Heart right ventricle (tissue), 16 donors: ENCODE measurements at regions of chr2 and their contacts with region 1.

Region 1: DNA sequence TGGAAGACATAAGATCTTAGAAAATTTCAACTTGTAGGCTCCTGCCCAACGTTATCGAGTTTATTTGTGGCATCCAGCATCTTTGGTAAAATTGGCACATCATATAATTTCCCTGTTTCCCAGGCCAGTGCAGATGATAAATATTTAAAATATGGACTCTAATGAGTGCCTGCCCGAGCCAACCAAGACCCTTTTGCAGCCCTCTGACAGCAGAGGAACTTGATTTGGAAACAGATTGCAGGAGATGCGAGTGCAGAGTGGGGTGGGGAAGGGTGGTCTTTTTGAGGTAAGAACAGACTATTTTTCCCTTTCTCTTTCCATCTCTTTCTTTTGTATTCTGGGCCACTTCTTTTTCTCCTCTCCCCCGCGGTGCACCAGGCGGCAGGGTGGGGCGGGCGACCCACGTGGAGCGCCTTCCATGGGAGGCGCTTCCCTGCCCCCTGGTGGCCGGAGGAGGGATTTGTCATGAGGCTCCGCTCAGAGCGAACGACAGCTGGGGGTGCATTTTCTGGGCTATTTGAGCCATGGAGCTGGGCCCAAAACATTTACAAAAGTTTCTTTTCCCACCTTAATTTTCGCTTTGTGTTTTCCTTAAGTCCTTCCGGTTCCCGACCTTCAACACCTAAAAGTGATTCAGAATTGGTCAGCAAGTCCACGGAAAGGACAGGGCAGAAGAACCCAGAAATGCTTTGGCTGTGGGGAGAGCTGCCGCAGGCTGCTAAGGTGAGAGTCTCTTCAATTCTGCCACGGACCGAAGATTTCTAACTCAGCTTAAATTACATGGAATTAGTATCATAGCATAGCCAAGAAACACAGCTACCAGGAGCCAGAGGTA is 32.7 kb downstream of the LPIN1 start:
- DNase-seq: peak; percentile 79 to 85
- ATAC-seq: peak; percentile 90 to 94 (median 92)
- H3K4me3 ChIP-seq: peak overlapping the region in 6 of 10 donors; percentile 16 to 36 (median 24)
- H3K27ac ChIP-seq: peak overlapping the region in 1 of 10 donors; percentile 54
- H3K4me1 ChIP-seq: peaks cover 0 to 36% (median 20%) of the 10 kb centered on the region in 9 donors
- H3K27me3 ChIP-seq: no peaks in the 10 kb centered on the region
- CTCF ChIP-seq: peak; percentile 96 to 99 (median 97)

Region 2: DNA sequence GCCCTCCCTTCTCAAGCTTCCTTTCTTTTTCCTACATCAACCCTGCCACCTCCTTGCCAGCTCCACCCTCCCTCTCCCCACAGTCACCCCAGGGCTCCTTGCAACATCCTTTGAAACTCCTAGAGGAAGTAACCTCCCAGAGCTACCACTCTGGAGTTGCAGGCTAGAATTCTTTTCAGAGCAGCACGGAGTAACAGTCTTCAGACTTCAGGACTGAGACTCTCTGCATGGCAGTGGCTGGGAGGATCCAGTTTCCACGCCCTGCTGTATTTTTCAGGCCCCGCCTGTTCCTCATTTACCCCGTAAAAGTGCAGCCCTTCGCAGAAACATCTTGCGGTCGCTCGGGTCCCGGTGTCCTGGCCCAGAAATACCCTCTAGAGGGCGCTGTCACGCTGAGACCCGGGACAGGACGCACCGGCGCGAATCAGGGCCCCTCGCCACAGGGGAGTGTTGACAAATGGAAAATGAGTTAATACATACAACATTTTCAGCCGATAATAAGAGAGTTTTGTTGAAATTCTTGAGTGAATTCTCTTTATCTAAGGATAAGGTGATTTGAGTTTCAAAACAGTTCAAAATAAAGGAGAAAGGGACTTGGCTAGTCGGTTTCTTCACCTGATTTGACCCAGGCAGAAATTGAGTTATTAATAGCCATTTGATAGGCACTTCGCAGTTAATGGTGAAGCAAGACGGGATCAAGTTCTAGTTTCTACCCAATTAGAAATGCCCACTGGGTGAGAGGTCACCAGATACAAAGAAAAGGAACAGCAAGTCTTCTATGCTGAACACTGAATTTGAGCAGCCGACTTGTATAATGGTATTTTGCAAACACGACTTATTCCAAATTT is 90.7 kb before region 1 on chr2:
- intact Hi-C with region 1: loop called (anchors 1 to 5 kb)
- DNase-seq: peak; percentile 80 to 84
- ATAC-seq: peak; percentile 81 to 94 (median 88)
- H3K4me3 ChIP-seq: peak overlapping the region in 8 of 10 donors; percentile 4 to 43 (median 31)
- H3K27ac ChIP-seq: peak overlapping the region in 8 of 10 donors; percentile 1 to 69 (median 44)
- H3K4me1 ChIP-seq: peaks cover 0 to 32% (median 19%) of the 10 kb centered on the region in 9 donors
- H3K27me3 ChIP-seq: peaks cover 0 to 17% (median 9%) of the 10 kb centered on the region in 7 donors
- CTCF ChIP-seq: peak; percentile 71 to 93 (median 88)

Region 3: DNA sequence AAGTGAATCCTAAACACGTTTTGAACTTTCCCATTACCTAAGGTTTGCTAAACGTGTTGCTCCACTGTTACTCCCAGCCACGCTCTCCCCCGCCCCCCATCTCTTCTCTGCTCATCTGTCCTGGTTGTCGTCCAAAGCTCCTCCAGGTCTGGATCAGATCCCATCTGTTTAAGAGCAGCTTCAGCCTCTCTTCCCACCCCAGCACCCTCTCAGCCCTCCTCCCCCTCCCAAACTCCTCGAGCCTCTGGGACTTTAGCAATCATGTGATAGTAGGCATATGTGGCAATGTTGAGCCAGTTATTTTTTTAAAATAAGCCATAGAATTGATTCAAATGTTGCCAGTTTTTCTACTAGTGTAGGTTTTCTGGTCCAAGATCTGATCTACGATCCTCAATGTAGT is 52.8 kb before region 1 on chr2:
- intact Hi-C with region 1: no loop called
- DNase-seq: no peak
- ATAC-seq: no peak
- H3K4me3 ChIP-seq: no peak overlapping the region
- H3K27ac ChIP-seq: no peak overlapping the region
- H3K4me1 ChIP-seq: peaks cover 0 to 6% (median 0%) of the 10 kb centered on the region in 9 donors
- H3K27me3 ChIP-seq: peaks cover 0 to 21% (median 5%) of the 10 kb centered on the region in 7 donors
- CTCF ChIP-seq: no peak

Region 4: GRCh38 chr2:11738589-11739436 is 40.3 kb before region 1 on chr2:
- intact Hi-C with region 1: loop called (anchors 1 to 5 kb)
- DNase-seq: peak; percentile 56 to 64
- ATAC-seq: peak; percentile 79 to 93 (median 91)
- H3K4me3 ChIP-seq: no peak overlapping the region
- H3K27ac ChIP-seq: peak overlapping the region in 2 of 10 donors; percentile 40 to 41
- H3K4me1 ChIP-seq: peaks cover 0 to 17% (median 9%) of the 10 kb centered on the region in 9 donors
- H3K27me3 ChIP-seq: peaks cover 0 to 18% (median under 1%) of the 10 kb centered on the region in 7 donors
- CTCF ChIP-seq: peak in 7 of 9 donors; percentile 42 to 65 (median 58)